ENCODE measurements at regions of chr6 and their contacts with region 1.

Region 1: DNA sequence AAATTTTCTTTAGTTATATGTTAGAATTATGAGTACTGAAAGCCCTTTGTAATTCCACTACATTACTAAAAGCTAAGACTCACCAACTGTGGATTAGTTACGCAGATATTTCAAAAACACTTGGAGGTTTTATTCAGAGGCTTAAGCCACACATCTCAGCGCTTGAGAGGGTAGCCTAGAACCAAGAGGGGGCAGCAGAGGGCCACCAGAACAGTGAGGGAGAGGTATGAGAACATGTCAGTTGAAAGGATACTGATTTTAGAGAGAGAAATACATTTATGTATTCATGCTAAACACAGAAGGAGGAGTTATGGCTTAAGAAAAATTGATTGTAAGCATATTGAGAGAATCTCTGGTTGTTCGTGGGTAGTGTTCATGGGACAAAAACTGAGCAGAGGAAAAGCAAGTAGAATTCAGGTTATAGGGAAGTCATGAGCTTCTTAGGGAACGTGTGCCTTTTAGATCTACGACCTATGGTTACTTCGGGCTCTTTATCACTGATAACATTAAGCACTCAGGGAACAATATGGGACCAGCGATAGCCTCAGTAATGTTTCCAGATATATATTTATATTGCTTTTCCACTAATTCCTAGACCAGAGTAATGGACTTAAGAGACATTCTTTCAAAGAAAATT is 20.4 kb upstream of the SERINC1 start:
- DNase-seq: peak; percentile 36
- H3K4me3 ChIP-seq: no peak overlapping the region
- H3K27ac ChIP-seq: no peak overlapping the region
- H3K27me3 ChIP-seq: no peaks in the 10 kb centered on the region
- CTCF ChIP-seq: peak; percentile 98

Region 2: DNA sequence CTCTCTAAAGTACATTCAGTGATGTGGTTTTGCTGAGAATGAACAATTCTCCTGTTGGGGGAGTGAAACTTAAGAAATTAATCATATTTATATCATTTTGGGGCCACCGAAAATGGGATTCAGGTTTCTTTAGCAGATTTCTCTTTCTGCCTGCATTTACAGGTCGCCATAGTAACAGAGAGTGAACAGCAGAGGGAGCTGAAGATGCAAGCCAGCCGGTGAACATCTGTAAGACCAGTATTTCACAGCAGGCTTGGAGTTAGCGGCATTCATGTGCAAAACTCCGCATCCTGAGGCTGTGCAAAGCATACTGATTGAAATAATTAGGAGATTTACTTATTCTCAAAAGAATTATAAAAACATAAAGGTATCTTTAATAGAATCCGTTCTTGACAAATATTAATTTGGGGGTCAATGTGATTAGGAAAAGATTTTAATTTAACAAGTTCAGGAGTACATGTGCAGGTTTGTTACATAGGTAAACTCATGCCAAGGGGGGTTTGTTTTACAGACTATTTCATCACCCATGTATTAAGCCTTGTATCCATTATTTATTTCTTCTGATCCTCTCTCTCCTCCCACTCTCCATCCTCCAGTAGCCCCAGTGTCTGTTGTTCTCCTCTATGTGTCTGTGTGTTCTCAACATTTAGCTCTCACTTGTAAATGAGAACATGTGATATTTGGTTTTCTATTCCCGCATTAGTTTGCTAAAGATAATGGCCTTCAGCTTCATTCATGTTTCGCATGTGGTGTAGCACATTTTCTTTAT is 110.4 kb before region 1 on chr6:
- CTCF ChIA-PET with region 1: interaction called, 18 read pairs
- POLR2A ChIA-PET with region 1: no interaction called
- DNase-seq: peak; percentile 71
- H3K4me3 ChIP-seq: no peak overlapping the region
- H3K27ac ChIP-seq: no peak overlapping the region
- H3K27me3 ChIP-seq: peaks cover 2% of the 10 kb centered on the region
- CTCF ChIP-seq: peak; percentile 81

Region 3: GRCh38 chr6:122471107-122472021 is 20.7 kb before region 1 on chr6 and contains the start of gene SERINC1:
- CTCF ChIA-PET with region 1: interaction called, 24 read pairs
- POLR2A ChIA-PET with region 1: no interaction called
- DNase-seq: peak; percentile 88
- H3K4me3 ChIP-seq: peak within 1 kb of the TSS; percentile 95
- H3K27ac ChIP-seq: peak within 1 kb of the TSS; percentile 71
- H3K27me3 ChIP-seq: no peaks in the 10 kb centered on the region
- CTCF ChIP-seq: no peak
- polyA plus RNA-seq, gene SERINC1: 141 and 186 TPM in 2 replicates

Region 4: DNA sequence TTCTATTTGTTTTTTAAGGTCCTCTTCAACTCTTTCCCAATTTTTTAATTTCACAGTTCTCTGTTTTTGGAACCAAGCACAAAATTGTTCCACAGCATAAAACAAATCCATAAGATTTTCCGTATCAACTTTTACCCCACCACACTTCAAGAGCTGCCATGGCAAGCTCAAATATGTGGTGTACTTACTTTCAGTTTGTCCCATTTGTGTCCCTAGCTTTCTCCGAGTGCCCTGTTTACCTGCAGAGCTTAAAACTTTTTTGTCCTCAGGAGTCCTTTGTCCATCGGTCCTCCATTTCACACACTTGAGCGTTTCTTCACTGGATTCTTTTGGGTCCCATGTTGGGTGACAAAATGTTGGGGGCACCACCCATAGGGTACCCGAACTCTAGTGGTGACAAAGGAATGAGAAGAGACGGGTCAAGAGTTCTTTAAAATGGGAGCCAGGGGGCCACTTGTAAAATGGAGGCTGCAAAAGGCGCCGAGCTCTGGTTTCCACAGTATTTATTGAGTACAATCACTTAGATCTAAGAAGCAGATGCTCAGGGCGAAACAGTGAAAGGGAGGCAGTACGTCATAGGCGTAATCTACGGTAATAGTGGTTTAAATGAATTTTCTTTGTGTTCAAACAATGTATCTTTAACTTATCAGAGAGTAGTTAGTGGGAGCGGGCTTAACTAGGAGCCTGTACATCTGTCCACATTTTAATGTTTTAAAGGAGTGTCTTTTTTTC is 19.3 kb after region 1 on chr6:
- CTCF ChIA-PET with region 1: interaction called, 12 read pairs
- POLR2A ChIA-PET with region 1: no interaction called
- DNase-seq: no peak
- H3K4me3 ChIP-seq: no peak overlapping the region
- H3K27ac ChIP-seq: no peak overlapping the region
- H3K27me3 ChIP-seq: no peaks in the 10 kb centered on the region
- CTCF ChIP-seq: no peak